Ovary (tissue), 10 donors: ENCODE measurements at regions of chr16 and their contacts with region 1.

Region 1: DNA sequence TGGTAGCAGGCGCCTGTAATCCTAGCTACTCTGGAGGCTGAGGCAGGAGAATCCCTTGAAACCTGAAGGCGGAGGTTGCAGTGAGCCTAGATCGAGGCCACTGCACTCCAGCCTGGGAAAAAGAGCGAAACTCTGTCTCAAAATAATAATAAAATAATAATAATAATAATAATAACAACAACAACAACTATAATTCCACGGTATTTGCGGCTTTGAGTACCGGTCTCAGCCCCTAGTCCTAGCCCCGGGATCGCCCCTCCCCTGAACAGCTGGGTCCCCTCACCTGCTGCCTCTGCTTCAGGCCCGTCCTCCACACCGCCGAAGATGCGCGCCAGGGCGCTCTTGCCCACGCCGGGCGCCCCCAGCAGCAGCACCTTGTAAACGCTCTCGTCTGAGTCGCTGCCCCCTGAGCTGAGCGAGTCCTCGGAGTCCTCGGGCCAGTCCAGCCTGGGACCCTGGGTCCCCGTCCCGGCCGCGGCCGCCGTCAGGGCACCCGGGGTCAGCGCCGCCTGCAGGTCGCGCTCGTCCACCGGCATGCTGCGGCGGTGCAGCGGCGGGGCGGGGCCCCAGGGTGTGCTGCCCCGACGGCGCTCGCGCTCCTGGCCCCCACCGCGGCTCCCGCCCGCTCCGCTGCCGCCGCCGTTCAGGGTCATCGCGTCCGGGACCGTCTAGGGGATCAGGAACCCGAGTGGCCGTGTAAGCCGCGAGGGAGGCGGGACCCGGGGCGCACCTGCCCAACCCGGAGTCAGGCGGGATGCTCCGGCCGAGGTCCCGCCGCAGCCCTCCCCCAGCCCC is 611 bp downstream of the RRAD start:
- DNase-seq: peak in 4 of 5 donors; percentile 48 to 64 (median 53)
- H3K4me3 ChIP-seq: peak overlapping the region; percentile 52
- H3K27ac ChIP-seq: peak overlapping the region; percentile 63 to 73
- H3K4me1 ChIP-seq: peaks cover 10% of the 10 kb centered on the region
- H3K27me3 ChIP-seq: no peaks in the 10 kb centered on the region
- CTCF ChIP-seq: peak in 2 of 3 donors; percentile 35 to 48
- EP300 ChIP-seq: no peak
- POLR2A ChIP-seq: no peak

Region 2: DNA sequence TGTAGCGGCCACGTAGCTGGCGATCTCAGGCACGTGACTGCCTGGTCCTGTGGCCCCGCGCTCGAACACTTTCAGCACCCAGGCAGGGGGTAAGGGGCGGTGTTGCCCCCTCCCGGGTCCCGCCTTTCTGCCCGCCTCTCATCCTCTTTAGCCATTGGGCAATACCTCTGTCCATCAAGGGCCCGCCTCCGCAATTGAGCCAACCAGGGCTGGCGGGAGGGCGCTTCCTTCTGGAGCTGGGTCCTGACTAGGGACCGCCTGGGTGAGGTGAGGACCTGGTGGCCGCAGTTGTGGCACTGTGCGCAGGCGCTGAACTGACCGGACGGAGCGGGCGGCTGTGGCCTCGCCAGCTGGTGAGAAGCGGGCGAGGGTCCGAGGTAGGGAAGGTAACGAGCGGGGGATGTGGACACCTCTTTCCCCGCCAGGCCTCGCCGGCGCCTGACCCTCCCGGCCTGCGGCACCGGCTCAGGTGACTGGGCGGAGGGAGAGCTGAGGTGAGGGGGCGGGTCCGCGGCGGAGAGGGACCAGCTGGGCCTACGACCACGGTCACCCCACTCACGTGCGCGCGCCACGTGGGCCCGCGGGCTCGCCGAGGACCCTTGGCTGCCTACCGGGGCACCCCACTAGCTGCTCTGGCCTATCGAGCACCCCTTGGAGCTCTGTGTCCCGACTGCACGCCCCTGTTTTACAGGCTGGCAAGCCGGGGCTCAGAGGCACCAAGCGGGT is 44.3 kb before region 1 on chr16 and contains the start of gene PDP2:
- intact Hi-C with region 1: no loop called
- DNase-seq: peak; percentile 94 to 96 (median 95)
- H3K4me3 ChIP-seq: peak within 1 kb of the TSS; percentile 62
- H3K27ac ChIP-seq: peak within 1 kb of the TSS; percentile 46 to 77
- H3K4me1 ChIP-seq: peaks cover 3% of the 10 kb centered on the region
- H3K27me3 ChIP-seq: no peaks in the 10 kb centered on the region
- CTCF ChIP-seq: peak in 1 of 3 donors; percentile 34
- EP300 ChIP-seq: no peak
- POLR2A ChIP-seq: peak; percentile 67
- total RNA-seq, gene PDP2: 3.9 to 23.3 (median 18.5) TPM

Region 3: GRCh38 chr16:66894948-66895688 is 29.6 kb before region 1 on chr16:
- intact Hi-C with region 1: loop called in 1 of 4 experiments (anchors 2 kb)
- DNase-seq: peak; percentile 74 to 82 (median 81)
- H3K4me3 ChIP-seq: no peak overlapping the region
- H3K27ac ChIP-seq: no peak overlapping the region
- H3K4me1 ChIP-seq: peaks cover 19% of the 10 kb centered on the region
- H3K27me3 ChIP-seq: no peaks in the 10 kb centered on the region
- CTCF ChIP-seq: peak; percentile 83 to 84 (median 84)
- EP300 ChIP-seq: no peak
- POLR2A ChIP-seq: no peak

Region 4: DNA sequence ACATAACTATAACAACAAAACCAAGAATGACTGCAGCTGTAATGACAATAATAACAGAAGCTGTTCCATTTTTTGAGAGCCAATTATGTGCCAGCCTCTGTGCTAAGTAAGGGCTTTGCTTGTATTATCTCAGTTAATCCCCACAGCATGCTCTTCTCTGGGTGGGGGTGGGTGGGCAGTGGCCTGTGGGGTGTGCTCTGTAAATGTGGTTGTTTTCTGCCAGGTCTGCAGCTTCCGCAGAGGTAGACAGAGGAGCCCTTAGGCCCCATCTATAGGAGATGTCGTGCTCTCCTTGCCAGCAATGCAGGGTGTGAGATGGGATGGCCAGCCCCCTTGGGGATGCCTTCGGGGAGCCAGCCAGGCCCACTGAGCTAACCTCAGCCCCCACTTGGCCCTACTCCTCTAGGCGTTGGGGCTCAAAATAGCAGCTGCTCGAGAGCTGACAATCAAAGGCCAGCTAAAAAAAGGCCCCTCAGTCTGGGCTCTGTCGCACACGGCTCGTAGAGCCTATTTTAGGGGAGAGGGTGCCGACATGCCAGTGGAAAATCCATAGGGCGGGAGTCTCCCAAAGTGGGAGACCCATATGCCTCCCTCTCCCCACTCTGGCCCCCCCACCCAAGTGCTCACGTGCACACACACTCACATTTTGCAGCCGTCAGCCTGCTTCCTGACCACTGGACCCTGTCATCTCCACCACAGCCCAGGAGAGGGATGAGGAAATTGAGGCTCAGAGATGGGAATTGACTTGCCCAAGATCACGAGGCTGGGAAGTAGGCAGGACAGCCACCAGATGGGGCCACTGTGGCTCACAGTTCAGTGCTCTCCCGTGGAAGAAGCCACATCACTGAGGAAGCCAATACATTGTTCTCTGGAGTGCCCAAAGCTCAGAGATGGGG is 21.8 kb before region 1 on chr16:
- intact Hi-C with region 1: loop called in 1 of 4 experiments (anchors 2 kb)
- DNase-seq: no peak
- H3K4me3 ChIP-seq: no peak overlapping the region
- H3K27ac ChIP-seq: peak overlapping the region in 1 of 2 donors; percentile 57
- H3K4me1 ChIP-seq: peaks cover 45% of the 10 kb centered on the region
- H3K27me3 ChIP-seq: no peaks in the 10 kb centered on the region
- CTCF ChIP-seq: no peak
- EP300 ChIP-seq: no peak
- POLR2A ChIP-seq: no peak

Region 5: GRCh38 chr16:67013823-67014633 is 89.3 kb after region 1 on chr16:
- intact Hi-C with region 1: no loop called
- DNase-seq: peak; percentile 89 to 95 (median 93)
- H3K4me3 ChIP-seq: peak overlapping the region; percentile 48
- H3K27ac ChIP-seq: peak overlapping the region; percentile 56 to 76
- H3K4me1 ChIP-seq: peaks cover 6% of the 10 kb centered on the region
- H3K27me3 ChIP-seq: no peaks in the 10 kb centered on the region
- CTCF ChIP-seq: peak in 2 of 3 donors; percentile 39 to 60
- EP300 ChIP-seq: no peak
- POLR2A ChIP-seq: no peak

Region 6: GRCh38 chr16:67028555-67029248 is 104.0 kb after region 1 on chr16 and contains the start of gene CBFB:
- intact Hi-C with region 1: no loop called
- DNase-seq: peak; percentile 90 to 94 (median 92)
- H3K4me3 ChIP-seq: peak within 1 kb of the TSS; percentile 58
- H3K27ac ChIP-seq: peak within 1 kb of the TSS; percentile 87 to 92
- H3K4me1 ChIP-seq: peaks cover 11% of the 10 kb centered on the region
- H3K27me3 ChIP-seq: no peaks in the 10 kb centered on the region
- CTCF ChIP-seq: no peak
- EP300 ChIP-seq: no peak
- POLR2A ChIP-seq: peak; percentile 75
- total RNA-seq, gene CBFB: 39.9 to 58.3 (median 48.9) TPM